ENCODE measurements at regions of chr2 and their contacts with region 1.

Region 1: GRCh38 chr2:68244456-68244855 is 7.9 kb downstream of the PPP3R1 start:
- DNase-seq: no peak
- H3K4me3 ChIP-seq: no peak overlapping the region
- H3K27ac ChIP-seq: peak overlapping the region in 1 of 5 donors; percentile 11
- H3K4me1 ChIP-seq: peaks cover 35 to 100% (median 74%) of the 10 kb centered on the region in 4 donors
- H3K27me3 ChIP-seq: no peaks in the 10 kb centered on the region
- CTCF ChIP-seq: no peak
- EP300 ChIP-seq: no peak
- POLR2A ChIP-seq: no peak

Region 2: GRCh38 chr2:68196120-68196716 is 48.2 kb before region 1 on chr2:
- intact Hi-C with region 1: loop called (anchors 10 kb)
- DNase-seq: peak in 1 of 2 donors; percentile 71
- H3K4me3 ChIP-seq: no peak overlapping the region
- H3K27ac ChIP-seq: no peak overlapping the region
- H3K4me1 ChIP-seq: peaks cover 20 to 79% (median 40%) of the 10 kb centered on the region in 4 donors
- H3K27me3 ChIP-seq: no peaks in the 10 kb centered on the region
- CTCF ChIP-seq: peak in 3 of 7 experiments; percentile 49 to 73 (median 66)
- EP300 ChIP-seq: no peak
- POLR2A ChIP-seq: no peak

Region 3: GRCh38 chr2:68295516-68295915 is 51.1 kb after region 1 on chr2:
- intact Hi-C with region 1: no loop called
- DNase-seq: no peak
- H3K4me3 ChIP-seq: no peak overlapping the region
- H3K27ac ChIP-seq: no peak overlapping the region
- H3K4me1 ChIP-seq: peaks cover 0 to 11% (median 0%) of the 10 kb centered on the region in 4 donors
- H3K27me3 ChIP-seq: no peaks in the 10 kb centered on the region
- CTCF ChIP-seq: no peak
- EP300 ChIP-seq: no peak
- POLR2A ChIP-seq: no peak

Measured in stomach (tissue), 19 donors.